Caco-2 (cell line): ENCODE measurements at regions of chr1 and their contacts with region 1.

Region 1: DNA sequence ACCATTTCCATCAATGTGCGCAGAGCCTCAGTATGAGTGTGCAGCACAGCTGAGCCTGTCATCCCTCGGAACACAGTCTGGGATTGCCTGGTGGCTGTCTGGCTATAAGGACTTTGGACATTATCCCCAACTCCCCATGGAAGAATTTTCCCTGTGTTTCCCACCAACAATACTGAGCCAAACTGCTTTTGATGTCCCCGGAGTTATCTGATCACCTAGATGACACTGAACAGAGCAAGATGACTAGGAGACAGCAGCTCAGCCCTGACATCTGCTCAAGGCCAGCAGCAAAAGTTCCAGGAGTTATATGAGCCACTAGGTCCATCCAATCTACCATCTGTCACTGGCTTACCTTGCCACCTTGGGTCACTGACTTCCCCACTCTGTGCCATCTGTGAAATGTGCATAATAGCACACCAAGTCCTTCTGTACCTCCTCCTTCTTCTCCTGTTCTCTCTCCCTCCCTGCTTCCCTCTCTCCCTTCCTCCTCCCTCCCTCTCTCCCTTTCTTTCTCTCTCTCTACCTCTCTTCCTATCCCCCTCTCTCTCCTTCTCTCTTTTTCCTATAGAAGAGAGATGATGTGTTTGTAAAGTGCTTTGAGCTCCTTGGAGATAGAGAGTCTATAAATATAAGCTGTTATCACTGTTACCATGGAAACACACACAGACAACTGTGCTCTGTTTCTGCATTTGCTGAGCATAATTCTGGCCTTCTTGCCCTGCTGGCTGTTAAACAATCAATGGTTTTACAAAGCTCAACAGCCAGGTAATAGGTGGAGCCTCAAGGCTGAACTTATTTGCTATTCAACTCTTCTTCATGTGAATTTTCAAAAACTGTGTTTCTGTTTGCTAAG is 19.7 kb upstream of the ATP1B1 start:
- DNase-seq: peak in 1 of 2 experiments; percentile 52
- H3K4me3 ChIP-seq: no peak overlapping the region
- H3K4me3 Mint-ChIP-seq: no peak overlapping the region
- H3K27ac Mint-ChIP-seq: peak overlapping the region; percentile 65
- H3K4me1 ChIP-seq: peaks cover 15% of the 10 kb centered on the region
- H3K4me1 Mint-ChIP-seq: peaks cover 15% of the 10 kb centered on the region
- H3K27me3 ChIP-seq: no peaks in the 10 kb centered on the region
- H3K27me3 Mint-ChIP-seq: no peaks in the 10 kb centered on the region
- CTCF ChIP-seq: no peak

Region 2: DNA sequence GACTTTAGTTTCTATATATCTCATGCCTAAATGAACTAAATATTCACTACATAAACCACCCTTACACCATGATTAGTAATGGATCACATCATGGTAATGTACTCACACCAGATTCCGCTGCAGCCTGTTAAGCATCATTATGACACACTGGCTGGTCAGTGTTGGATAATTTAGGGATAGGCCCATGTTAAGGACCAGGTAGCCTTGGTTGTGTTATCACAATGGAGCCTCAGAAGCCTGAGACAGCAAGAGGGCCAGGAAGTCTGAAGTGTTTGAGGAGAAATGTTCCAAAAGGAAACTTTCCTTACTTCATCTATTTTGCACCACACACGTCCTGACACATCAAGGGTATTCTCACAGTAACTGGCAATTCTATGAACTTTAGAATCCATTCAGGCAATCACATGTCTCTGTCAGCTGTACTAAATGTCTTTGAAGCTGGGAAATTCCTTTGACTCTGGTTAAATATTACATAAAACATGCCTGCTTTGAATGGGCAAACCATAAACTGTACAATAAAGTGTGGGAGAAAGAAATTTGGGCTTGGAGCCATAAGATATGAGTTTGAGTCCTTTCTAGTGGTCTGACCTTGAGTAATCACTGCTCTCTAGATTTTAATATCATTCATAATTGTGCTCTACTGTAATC is 252.5 kb before region 1 on chr1:
- CTCF ChIA-PET with region 1: no interaction called
- POLR2A ChIA-PET with region 1: no interaction called
- intact Hi-C with region 1: no loop called
- DNase-seq: peak in 1 of 2 experiments; percentile 52
- H3K4me3 ChIP-seq: no peak overlapping the region
- H3K4me3 Mint-ChIP-seq: peak overlapping the region; percentile 30
- H3K27ac Mint-ChIP-seq: peak overlapping the region; percentile 79
- H3K4me1 ChIP-seq: peaks cover 53% of the 10 kb centered on the region
- H3K4me1 Mint-ChIP-seq: peaks cover 45% of the 10 kb centered on the region
- H3K27me3 ChIP-seq: no peaks in the 10 kb centered on the region
- H3K27me3 Mint-ChIP-seq: no peaks in the 10 kb centered on the region
- CTCF ChIP-seq: no peak

Region 3: GRCh38 chr1:169072945-169073730 is 13.7 kb before region 1 on chr1:
- CTCF ChIA-PET with region 1: no interaction called
- POLR2A ChIA-PET with region 1: no interaction called
- intact Hi-C with region 1: no loop called
- DNase-seq: no peak
- H3K4me3 ChIP-seq: no peak overlapping the region
- H3K4me3 Mint-ChIP-seq: no peak overlapping the region
- H3K27ac Mint-ChIP-seq: no peak overlapping the region
- H3K4me1 ChIP-seq: no peaks in the 10 kb centered on the region
- H3K4me1 Mint-ChIP-seq: peaks cover 8% of the 10 kb centered on the region
- H3K27me3 ChIP-seq: no peaks in the 10 kb centered on the region
- H3K27me3 Mint-ChIP-seq: no peaks in the 10 kb centered on the region
- CTCF ChIP-seq: no peak

Region 4: DNA sequence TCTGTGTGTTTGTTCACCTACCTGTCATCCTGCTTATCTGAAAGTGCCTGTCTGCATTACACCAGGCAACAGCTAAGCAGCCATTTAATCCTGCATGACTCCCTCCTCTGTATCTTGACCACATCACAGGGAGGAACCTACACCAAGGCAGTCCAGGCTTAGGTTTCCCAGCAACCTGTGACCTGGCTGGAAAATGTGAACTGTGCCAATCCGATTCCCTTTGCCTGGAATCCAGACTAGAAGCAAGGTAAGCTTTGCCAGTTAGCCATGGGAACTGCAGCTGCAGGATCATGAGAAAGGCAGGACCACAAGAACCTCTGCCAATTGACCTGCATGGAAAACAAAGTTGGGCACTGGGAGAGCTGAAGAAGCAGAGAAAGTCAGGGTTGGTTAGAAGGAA is 13.4 kb after region 1 on chr1:
- CTCF ChIA-PET with region 1: no interaction called
- POLR2A ChIA-PET with region 1: no interaction called
- intact Hi-C with region 1: loop called (anchors 2 kb)
- DNase-seq: no peak
- H3K4me3 ChIP-seq: no peak overlapping the region
- H3K4me3 Mint-ChIP-seq: peak overlapping the region; percentile 22
- H3K27ac Mint-ChIP-seq: peak overlapping the region; percentile 55
- H3K4me1 ChIP-seq: peaks cover 68% of the 10 kb centered on the region
- H3K4me1 Mint-ChIP-seq: peaks cover 36% of the 10 kb centered on the region
- H3K27me3 ChIP-seq: no peaks in the 10 kb centered on the region
- H3K27me3 Mint-ChIP-seq: no peaks in the 10 kb centered on the region
- CTCF ChIP-seq: no peak